CD4-positive, alpha-beta T cell (primary cell): ENCODE measurements at regions of chr5 and their contacts with region 1.

Region 1: DNA sequence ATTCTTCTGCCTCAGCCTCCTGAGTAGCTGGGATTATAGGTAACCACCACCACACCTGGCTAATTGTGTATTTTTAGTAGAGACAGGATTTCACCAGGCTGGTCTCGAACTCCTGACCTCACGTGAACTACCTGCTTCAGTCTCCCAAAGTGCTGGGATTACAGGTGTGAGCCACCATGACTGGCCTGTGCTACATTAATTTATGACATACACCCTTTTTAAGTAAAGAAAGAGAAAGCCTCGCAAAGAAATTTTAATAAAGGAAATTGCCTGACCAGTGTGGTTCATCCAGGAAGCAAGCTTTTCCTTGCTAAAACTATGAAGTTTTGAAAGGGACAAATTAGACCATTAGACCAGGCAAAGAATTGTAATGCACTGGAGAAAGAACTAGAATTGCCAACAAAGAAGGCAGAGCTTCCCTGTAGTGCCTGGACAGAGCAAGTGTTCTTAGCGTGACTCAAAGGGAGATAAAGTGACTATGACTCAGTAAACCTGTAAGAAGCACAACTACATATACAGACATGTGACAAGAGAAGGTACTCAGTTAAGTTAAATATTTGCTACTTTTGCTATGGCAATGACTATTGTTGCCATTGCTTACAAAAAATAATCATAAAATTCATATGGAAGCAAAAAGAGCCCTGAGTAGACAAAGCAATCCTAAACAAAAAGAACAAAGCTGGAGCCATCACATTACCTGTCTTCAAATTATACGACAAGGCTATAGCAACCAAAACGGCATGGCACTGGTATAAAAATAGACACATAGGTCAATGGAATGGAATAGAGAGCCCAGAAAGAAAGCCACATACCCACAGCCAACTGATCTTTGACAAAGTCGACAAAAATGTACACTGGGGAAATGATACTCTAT is 54.6 kb downstream of the FYB1 start:
- DNase-seq: peak in 4 of 14 experiments; percentile 40 to 76 (median 60)
- ATAC-seq: peak; percentile 79
- H3K4me3 ChIP-seq: peak overlapping the region; percentile 13
- H3K4me3 Mint-ChIP-seq: peak overlapping the region; percentile 81
- H3K27ac ChIP-seq: peak overlapping the region; percentile 59 to 64
- H3K27ac Mint-ChIP-seq: peak overlapping the region; percentile 96
- H3K4me1 ChIP-seq: peaks cover 53% of the 10 kb centered on the region
- H3K4me1 Mint-ChIP-seq: peaks cover 96% of the 10 kb centered on the region
- H3K27me3 ChIP-seq: no peaks in the 10 kb centered on the region
- H3K27me3 Mint-ChIP-seq: no peaks in the 10 kb centered on the region
- CTCF ChIP-seq: no peak

Region 2: GRCh38 chr5:39187831-39188731 is 23.3 kb after region 1 on chr5:
- CTCF ChIA-PET with region 1: interaction called, 9 read pairs
- POLR2A ChIA-PET with region 1: interaction called, 408 read pairs
- intact Hi-C with region 1: no loop called
- DNase-seq: peak in 6 of 14 experiments; percentile 36 to 63 (median 54)
- ATAC-seq: peak; percentile 37
- H3K4me3 ChIP-seq: peak overlapping the region; percentile 46
- H3K4me3 Mint-ChIP-seq: peak overlapping the region; percentile 91
- H3K27ac ChIP-seq: peak overlapping the region; percentile 67 to 79
- H3K27ac Mint-ChIP-seq: peak overlapping the region; percentile 96
- H3K4me1 ChIP-seq: peaks cover 53% of the 10 kb centered on the region
- H3K4me1 Mint-ChIP-seq: peaks cover 97% of the 10 kb centered on the region
- H3K27me3 ChIP-seq: no peaks in the 10 kb centered on the region
- H3K27me3 Mint-ChIP-seq: no peaks in the 10 kb centered on the region
- CTCF ChIP-seq: no peak

Region 3: GRCh38 chr5:39194466-39195136 is 29.8 kb after region 1 on chr5:
- CTCF ChIA-PET with region 1: interaction called, 4 read pairs
- POLR2A ChIA-PET with region 1: interaction called, 408 read pairs
- intact Hi-C with region 1: loop called (anchors 2 to 5 kb)
- DNase-seq: peak in 1 of 14 experiments; percentile 52
- ATAC-seq: no peak
- H3K4me3 ChIP-seq: peak overlapping the region; percentile 76
- H3K4me3 Mint-ChIP-seq: peak overlapping the region; percentile 85
- H3K27ac ChIP-seq: peak overlapping the region; percentile 79 to 83
- H3K27ac Mint-ChIP-seq: peak overlapping the region; percentile 96
- H3K4me1 ChIP-seq: peaks cover 50% of the 10 kb centered on the region
- H3K4me1 Mint-ChIP-seq: peaks cover 77% of the 10 kb centered on the region
- H3K27me3 ChIP-seq: no peaks in the 10 kb centered on the region
- H3K27me3 Mint-ChIP-seq: no peaks in the 10 kb centered on the region
- CTCF ChIP-seq: no peak

Region 4: GRCh38 chr5:39202597-39203274 is 38.0 kb after region 1 on chr5:
- CTCF ChIA-PET with region 1: interaction called, 4 read pairs
- POLR2A ChIA-PET with region 1: interaction called, 10 read pairs
- intact Hi-C with region 1: loop called (anchors 2 to 5 kb)
- DNase-seq: peak in 6 of 14 experiments; percentile 35 to 83 (median 68)
- ATAC-seq: peak; percentile 62
- H3K4me3 ChIP-seq: peak overlapping the region; percentile 76
- H3K4me3 Mint-ChIP-seq: peak overlapping the region; percentile 93
- H3K27ac ChIP-seq: peak overlapping the region; percentile 82
- H3K27ac Mint-ChIP-seq: peak overlapping the region; percentile 96
- H3K4me1 ChIP-seq: peaks cover 28% of the 10 kb centered on the region
- H3K4me1 Mint-ChIP-seq: peaks cover 45% of the 10 kb centered on the region
- H3K27me3 ChIP-seq: no peaks in the 10 kb centered on the region
- H3K27me3 Mint-ChIP-seq: no peaks in the 10 kb centered on the region
- CTCF ChIP-seq: no peak